ENCODE measurements at regions of chr14 and their contacts with region 1.

Region 1: GRCh38 chr14:21455911-21456667 is at the start of gene CHD8:
- DNase-seq: peak; percentile 99
- H3K4me3 Mint-ChIP-seq: peak within 1 kb of the TSS; percentile 98
- H3K27ac Mint-ChIP-seq: peak within 1 kb of the TSS; percentile 99
- H3K4me1 Mint-ChIP-seq: peaks cover 37% of the 10 kb centered on the region
- H3K27me3 Mint-ChIP-seq: no peaks in the 10 kb centered on the region
- total RNA-seq, gene CHD8: 108 to 112 TPM

Region 2: DNA sequence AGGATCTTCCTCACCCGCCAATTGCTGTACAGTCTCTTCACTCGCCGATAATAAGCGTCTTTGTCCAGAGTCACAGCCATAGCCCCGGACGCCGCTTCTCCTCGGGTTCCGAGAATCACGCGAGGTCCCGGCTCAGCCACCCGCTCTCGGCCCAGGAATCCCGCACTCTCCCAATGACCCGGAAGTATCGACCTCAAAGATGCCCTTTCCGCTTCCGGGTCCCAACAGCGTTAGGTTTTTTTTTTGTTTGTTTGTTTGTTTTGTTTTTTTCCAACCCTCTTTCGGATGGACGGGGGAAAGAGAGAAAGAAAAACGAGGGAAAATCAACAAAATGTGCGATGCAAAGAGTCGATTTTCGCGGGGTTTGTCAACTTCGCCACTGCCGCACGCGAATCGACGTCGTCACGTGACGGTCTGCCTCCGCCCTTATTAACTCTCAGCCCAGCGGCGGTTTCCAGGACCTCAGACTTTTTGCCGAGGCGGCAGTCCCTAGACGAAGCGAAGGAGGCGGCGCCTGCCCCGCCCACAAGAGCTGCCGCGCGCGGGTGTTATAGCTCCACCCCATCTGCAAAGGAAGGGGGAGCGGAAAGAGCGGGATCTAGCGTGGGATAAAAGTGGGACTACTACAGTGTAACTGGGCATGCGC is 72.1 kb before region 1 on chr14 and contains the start of gene SUPT16H:
- CTCF ChIA-PET with region 1: interaction called, 7 read pairs
- POLR2A ChIA-PET with region 1: interaction called, 19 read pairs
- DNase-seq: peak; percentile 97
- H3K4me3 Mint-ChIP-seq: peak within 1 kb of the TSS; percentile 95
- H3K27ac Mint-ChIP-seq: peak within 1 kb of the TSS; percentile 97
- H3K4me1 Mint-ChIP-seq: peaks cover 44% of the 10 kb centered on the region
- H3K27me3 Mint-ChIP-seq: no peaks in the 10 kb centered on the region
- total RNA-seq, gene SUPT16H: 114 TPM

Region 3: DNA sequence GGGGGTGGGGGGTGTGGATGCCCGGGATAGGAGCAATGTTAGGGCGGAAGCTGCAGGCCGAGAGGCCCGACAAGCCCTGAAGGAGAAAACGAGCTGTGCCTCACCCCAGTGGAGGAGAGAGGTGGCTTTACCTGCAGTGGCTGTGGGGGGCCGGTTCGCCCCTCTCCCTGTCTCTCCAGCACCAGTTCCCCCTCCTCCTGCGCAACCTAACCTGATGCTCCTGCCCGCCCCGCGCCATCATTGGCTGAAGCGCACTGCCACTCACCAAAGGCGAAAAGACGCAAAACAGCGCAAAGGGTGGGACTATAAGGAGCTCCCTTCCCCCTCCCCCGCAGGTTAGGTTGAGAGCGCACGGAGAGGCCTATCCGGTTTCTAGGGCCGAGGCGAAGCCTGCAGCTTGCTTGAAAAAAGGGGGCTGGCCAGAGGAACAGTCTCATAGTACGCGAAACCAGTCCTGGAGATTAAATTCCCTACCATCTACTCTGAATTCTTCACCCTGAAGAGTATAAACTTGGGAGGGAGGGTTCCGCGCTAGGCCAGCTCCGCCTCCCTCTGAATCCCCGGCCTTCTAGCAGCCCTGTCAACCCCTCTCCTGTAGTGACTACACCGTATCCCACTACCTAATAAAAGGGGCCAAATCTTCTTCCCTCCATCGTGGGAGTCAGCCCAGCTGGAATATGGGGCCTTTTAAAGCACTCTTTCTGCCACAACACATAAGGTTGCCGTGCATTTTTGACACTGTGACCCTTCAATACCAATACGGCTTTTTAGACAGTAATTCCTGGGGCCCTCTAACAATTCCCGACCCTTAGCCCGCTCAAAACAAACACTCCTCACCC is 18.8 kb before region 1 on chr14:
- CTCF ChIA-PET with region 1: interaction called, 38 read pairs
- POLR2A ChIA-PET with region 1: interaction called, 103 read pairs
- DNase-seq: peak; percentile 99
- H3K4me3 Mint-ChIP-seq: peak overlapping the region; percentile 86
- H3K27ac Mint-ChIP-seq: peak overlapping the region; percentile 76
- H3K4me1 Mint-ChIP-seq: peaks cover 50% of the 10 kb centered on the region
- H3K27me3 Mint-ChIP-seq: no peaks in the 10 kb centered on the region

Region 4: GRCh38 chr14:21476925-21477681 is 21.0 kb after region 1 on chr14 and contains the starts of genes RAB2B and TOX4:
- CTCF ChIA-PET with region 1: interaction called, 54 read pairs
- POLR2A ChIA-PET with region 1: interaction called, 46 read pairs
- DNase-seq: peak; percentile 97
- H3K4me3 Mint-ChIP-seq: peak within 1 kb of the TSS; percentile 100
- H3K27ac Mint-ChIP-seq: peak within 1 kb of the TSS; percentile 100
- H3K4me1 Mint-ChIP-seq: peaks cover 46% of the 10 kb centered on the region
- H3K27me3 Mint-ChIP-seq: no peaks in the 10 kb centered on the region
- total RNA-seq, gene RAB2B: 27.6 to 29.0 TPM
- total RNA-seq, gene TOX4: 82.1 to 85.6 TPM

Region 5: GRCh38 chr14:21510735-21511657 is 54.9 kb after region 1 on chr14 and contains the start of gene METTL3:
- CTCF ChIA-PET with region 1: interaction called, 12 read pairs
- POLR2A ChIA-PET with region 1: interaction called, 21 read pairs
- DNase-seq: peak; percentile 95
- H3K4me3 Mint-ChIP-seq: peak within 1 kb of the TSS; percentile 96
- H3K27ac Mint-ChIP-seq: peak within 1 kb of the TSS; percentile 96
- H3K4me1 Mint-ChIP-seq: peaks cover 43% of the 10 kb centered on the region
- H3K27me3 Mint-ChIP-seq: no peaks in the 10 kb centered on the region
- total RNA-seq, gene METTL3: 75.6 to 77.6 TPM